Adrenal gland (tissue), 19 donors: ENCODE measurements at regions of chr10 and their contacts with region 1.

Region 1: DNA sequence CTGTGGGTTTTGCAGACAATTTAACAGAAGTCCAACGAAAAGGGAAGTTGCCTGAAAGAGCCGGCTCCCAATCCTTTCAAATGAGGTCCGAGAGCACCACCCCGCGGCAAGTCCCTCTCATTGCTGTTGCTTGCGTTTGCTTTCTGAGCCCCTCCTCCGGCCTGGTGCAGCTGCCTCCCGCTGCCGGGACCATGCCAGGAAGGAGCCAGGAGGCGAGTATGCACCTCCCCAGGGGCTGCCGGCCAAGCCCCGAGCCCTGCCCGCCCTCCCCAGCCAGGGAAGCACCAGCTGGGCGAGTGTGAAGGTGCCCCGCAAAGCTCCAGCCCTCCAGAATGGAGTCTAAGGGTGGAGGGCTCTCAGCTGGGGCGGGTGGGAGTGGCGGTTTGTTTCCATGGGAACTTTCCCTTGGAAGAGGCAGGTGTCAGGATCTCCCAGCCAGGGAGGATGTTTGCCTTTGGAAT is 25.8 kb upstream of the PPP2R2D start:
- DNase-seq: peak; percentile 76 to 89 (median 83)
- H3K4me3 ChIP-seq: no peak overlapping the region
- H3K27ac ChIP-seq: no peak overlapping the region
- H3K4me1 ChIP-seq: peaks cover 0 to 6% of the 10 kb centered on the region in 2 donors
- H3K27me3 ChIP-seq: peaks cover 10% of the 10 kb centered on the region
- CTCF ChIP-seq: peak; percentile 60 to 77 (median 76)
- POLR2A ChIP-seq: no peak

Region 2: GRCh38 chr10:130179640-130180039 is 1695.4 kb before region 1 on chr10:
- intact Hi-C with region 1: loop called in 1 of 2 experiments (anchors 10 kb)
- DNase-seq: peak in 6 of 7 donors; percentile 39 to 70 (median 46)
- H3K4me3 ChIP-seq: no peak overlapping the region
- H3K27ac ChIP-seq: no peak overlapping the region
- H3K4me1 ChIP-seq: no peaks in the 10 kb centered on the region
- H3K27me3 ChIP-seq: no peaks in the 10 kb centered on the region
- CTCF ChIP-seq: peak in 5 of 6 experiments; percentile 46 to 62 (median 56)
- POLR2A ChIP-seq: no peak

Region 3: DNA sequence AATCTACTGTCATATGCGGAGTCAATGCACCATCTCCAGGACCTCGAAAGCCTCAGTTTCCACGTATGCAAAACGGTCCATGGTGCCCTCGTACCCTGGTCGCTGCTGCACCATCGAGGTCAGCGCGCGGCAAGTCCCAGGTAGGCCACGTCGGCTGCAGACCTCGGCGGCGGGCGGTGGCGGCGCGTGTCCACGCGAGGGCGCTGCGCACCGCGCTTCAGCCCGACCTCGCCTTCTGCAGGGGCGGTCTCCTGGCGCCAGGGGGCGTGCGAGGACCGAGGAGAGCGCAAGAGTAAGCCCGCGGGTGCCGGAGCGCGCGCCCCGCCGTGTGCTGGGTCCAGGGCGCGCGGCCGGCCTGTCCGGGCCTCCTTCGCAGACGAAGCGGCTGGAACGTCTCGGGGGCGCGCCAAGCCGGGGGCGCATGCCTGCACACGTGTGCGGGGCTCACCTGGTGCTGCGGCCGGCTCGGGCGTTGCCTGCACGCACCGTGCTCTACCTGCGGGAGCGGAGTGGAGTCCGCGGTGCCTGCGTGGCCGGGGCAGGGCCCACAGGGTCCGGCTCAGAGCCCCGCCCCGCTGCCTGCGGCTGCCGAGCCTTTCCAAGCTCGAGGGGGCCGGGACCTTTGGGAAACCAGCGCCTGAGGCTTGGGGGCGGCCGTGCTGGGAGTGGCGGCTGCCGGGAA is 1684.8 kb before region 1 on chr10:
- intact Hi-C with region 1: loop called (anchors 5 to 10 kb)
- DNase-seq: peak; percentile 79 to 92 (median 90)
- H3K4me3 ChIP-seq: peak overlapping the region in 2 of 4 donors; percentile 26 to 70
- H3K27ac ChIP-seq: no peak overlapping the region
- H3K4me1 ChIP-seq: peaks cover 6 to 11% of the 10 kb centered on the region in 2 donors
- H3K27me3 ChIP-seq: no peaks in the 10 kb centered on the region
- CTCF ChIP-seq: peak; percentile 83 to 100 (median 93)
- POLR2A ChIP-seq: no peak

Region 4: GRCh38 chr10:131453594-131454355 is 421.2 kb before region 1 on chr10:
- intact Hi-C with region 1: loop called in 1 of 2 experiments (anchors 10 kb)
- DNase-seq: peak; percentile 72 to 97 (median 84)
- H3K4me3 ChIP-seq: peak overlapping the region in 1 of 4 donors; percentile 46
- H3K27ac ChIP-seq: peak overlapping the region in 1 of 5 donors; percentile 69
- H3K4me1 ChIP-seq: peaks cover 4 to 10% of the 10 kb centered on the region in 2 donors
- H3K27me3 ChIP-seq: no peaks in the 10 kb centered on the region
- CTCF ChIP-seq: peak; percentile 83 to 96 (median 89)
- POLR2A ChIP-seq: no peak